Posterior vena cava (tissue), 2 donors: ENCODE measurements at regions of chr3 and their contacts with region 1.

Region 1: DNA sequence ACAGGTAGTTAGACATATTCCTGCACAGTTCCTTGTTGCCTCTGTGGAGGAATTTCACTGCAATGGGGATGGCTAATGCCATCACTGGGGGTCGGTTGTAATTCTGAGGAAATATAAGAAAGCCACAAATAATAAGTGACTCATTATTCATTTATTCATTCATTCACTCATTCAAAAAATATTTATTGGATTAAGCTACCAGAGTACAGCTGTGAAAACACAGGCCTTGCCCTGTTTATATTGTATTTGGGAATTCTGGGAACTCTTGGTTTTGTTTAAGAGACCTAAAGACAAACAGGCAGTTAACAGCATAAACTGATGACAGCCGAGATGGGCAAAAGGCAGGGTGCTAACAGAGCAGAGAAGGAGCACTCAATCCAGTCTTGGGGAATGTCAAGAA is 23.6 kb downstream of the PTX3 start:
- DNase-seq: no peak

Region 2: DNA sequence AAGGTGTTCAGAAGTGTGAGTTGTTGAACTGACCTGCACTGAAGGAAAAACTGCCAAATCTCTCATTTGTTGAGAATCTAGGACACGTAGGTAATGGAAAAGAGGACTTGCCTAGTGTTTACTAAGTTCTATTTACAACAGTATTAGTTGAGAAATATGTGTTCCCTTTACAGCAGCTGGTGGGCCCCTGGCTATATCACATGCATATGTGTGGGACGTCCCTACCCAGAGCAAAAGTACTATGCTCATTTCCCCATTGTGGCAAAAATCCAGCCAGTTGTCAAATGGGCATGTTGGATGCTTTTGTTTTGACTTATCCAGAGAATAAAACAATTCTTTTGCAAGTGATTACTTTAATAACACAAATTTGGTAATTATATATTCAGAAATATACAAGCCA is 136.9 kb before region 1 on chr3:
- intact Hi-C with region 1: loop called in 1 of 2 experiments (anchors 2 kb)
- DNase-seq: no peak

Region 3: GRCh38 chr3:157493627-157494550 is 33.6 kb after region 1 on chr3:
- intact Hi-C with region 1: no loop called
- DNase-seq: no peak